ENCODE measurements at regions of chr14 and their contacts with region 1.

Region 1: DNA sequence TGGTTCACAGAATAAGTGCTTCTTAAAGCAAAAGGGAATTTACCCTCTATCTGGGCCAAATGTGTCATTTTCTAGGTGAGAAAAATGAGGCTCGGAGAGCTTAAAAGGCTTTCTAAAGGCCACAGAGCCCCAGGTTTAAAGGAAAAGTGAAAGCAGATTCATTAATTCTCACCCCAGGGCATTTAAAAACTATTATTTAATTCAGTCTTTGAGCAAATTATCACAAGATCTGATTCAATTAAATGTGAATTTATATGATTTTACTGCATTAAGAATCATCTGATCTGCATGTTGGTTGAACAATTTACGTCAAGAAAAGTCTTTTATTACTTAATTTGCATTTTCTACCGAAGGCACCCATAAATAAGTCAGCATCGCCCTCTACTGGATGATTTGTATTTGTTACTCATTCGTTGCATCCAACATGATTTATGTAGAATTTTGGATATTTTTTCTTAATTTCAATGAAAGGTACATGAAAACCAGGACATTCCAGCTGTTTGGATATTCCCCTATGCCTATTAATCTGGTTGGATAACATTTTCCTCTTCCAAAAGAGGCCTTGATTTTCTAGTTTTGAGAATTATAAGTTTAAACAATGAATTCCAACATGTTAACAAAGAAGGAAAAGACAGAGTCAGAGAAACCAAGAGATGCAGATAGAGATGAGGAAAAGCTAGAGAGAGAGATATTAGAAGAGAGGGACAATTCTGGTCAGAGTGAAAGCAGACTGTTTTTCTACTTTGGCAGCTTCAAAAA is 19.1 kb upstream of the DHRS7 start:
- DNase-seq: no peak
- ATAC-seq: peak; percentile 49 to 77
- H3K4me3 ChIP-seq: peak overlapping the region; percentile 52
- H3K27ac ChIP-seq: peak overlapping the region; percentile 52
- H3K4me1 ChIP-seq: peaks cover 4% of the 10 kb centered on the region
- H3K27me3 ChIP-seq: no peaks in the 10 kb centered on the region
- CTCF ChIP-seq: peak; percentile 78

Region 2: GRCh38 chr14:59964251-59965007 is 219.9 kb before region 1 on chr14:
- intact Hi-C with region 1: loop called (anchors 5 kb)
- DNase-seq: no peak
- ATAC-seq: peak; percentile 57 to 61
- H3K4me3 ChIP-seq: no peak overlapping the region
- H3K27ac ChIP-seq: no peak overlapping the region
- H3K4me1 ChIP-seq: no peaks in the 10 kb centered on the region
- H3K27me3 ChIP-seq: no peaks in the 10 kb centered on the region
- CTCF ChIP-seq: no peak

Region 3: DNA sequence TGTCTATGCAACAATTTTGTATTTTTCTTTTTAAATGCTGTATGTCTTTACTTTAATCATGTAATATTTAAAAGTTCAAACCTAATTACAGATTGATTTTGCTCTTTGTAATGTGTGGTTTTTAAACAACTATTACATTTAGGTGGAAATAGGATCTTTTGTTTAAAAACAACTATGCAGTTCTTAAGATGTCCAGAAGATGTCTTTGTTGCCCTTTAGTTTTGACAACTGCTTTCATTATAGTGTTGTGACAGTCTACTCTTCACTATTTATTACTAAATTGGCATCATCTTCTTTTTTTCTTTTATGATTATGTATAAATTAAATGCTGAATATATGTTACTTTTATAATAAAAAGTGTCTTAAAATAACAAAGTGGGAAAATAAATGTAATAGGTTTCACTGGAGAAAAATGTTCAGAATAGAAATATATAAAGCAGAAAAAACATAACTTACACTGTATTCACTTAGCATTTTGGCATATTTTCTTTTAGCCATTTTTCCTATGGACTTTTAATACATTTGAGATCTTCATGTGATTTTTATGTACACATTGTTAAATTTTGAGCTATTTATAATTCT is 119.7 kb before region 1 on chr14:
- intact Hi-C with region 1: loop called (anchors 5 kb)
- DNase-seq: no peak
- ATAC-seq: no peak
- H3K4me3 ChIP-seq: no peak overlapping the region
- H3K27ac ChIP-seq: no peak overlapping the region
- H3K4me1 ChIP-seq: no peaks in the 10 kb centered on the region
- H3K27me3 ChIP-seq: no peaks in the 10 kb centered on the region
- CTCF ChIP-seq: peak; percentile 50

Region 4: GRCh38 chr14:60288279-60288678 is 104.0 kb after region 1 on chr14:
- intact Hi-C with region 1: no loop called
- DNase-seq: no peak
- ATAC-seq: no peak
- H3K4me3 ChIP-seq: no peak overlapping the region
- H3K27ac ChIP-seq: no peak overlapping the region
- H3K4me1 ChIP-seq: no peaks in the 10 kb centered on the region
- H3K27me3 ChIP-seq: no peaks in the 10 kb centered on the region
- CTCF ChIP-seq: no peak